Posterior vena cava (tissue), 2 donors: ENCODE measurements at regions of chr9 and their contacts with region 1.

Region 1: GRCh38 chr9:5939530-5939929 is 48.8 kb downstream of the MLANA start:
- DNase-seq: no peak

Region 2: DNA sequence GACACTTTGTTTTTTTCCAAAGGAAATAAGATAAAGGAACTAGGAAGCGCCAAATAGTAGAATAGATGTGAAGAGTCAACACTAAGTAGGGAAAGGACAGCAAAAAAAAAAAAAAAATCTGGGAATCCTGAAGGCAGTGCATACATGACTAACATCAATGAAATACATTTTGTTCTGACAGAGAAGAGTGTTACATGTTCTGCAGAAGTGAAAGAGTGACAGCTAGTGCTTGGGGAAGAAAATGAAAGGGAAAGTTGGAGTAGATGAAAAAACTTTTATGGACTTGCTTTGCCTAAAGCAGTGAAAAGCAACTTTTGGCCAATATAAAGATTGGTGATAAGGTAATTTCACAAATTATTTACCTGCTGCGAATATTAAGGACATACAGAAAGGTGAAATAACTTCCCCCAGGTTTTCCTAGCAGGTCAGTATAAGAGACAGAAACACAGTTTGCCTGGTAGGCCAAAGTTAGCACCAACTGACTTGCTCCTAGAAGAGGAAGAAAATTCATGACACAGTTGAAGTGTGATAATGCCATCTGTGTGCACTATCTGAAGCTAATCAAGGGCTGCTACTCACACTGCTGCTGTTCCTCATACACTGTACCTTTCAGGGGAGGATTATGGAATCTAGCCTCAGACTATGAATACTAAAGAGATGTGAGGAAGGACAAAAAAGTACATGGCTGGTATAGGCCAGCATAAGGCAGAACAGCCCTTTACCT is 37.3 kb after region 1 on chr9:
- intact Hi-C with region 1: no loop called
- DNase-seq: no peak

Region 3: DNA sequence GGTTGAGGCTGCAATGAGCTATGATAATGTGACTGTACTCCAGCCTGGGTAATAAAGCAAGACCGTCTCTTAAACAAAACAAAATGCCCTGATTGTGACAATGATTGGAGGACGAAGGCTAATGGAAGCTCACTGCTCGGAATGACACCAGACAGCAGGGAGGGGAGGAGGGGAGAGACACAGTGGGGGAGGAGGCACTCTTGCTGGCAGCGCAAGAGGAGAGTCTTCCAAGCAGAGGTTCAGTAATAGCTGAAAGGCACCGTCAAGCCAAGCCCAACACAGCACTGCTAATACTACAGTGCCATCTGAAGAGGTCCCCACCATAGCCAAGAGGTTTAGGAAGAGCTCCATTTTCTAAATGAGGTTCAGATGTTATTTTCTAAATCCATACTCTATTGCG is 603.7 kb after region 1 on chr9:
- intact Hi-C with region 1: loop called in 1 of 2 experiments (anchors 5 kb)
- DNase-seq: no peak